BJ (cell line): ENCODE measurements at regions of chr7 and their contacts with region 1.

Region 1: GRCh38 chr7:136687693-136688322 is 180.6 kb upstream of the CHRM2 start:
- DNase-seq: no peak
- H3K4me3 ChIP-seq: no peak overlapping the region
- H3K27me3 ChIP-seq: no peaks in the 10 kb centered on the region
- CTCF ChIP-seq: peak; percentile 68

Region 2: GRCh38 chr7:136665878-136666509 is 21.8 kb before region 1 on chr7:
- CTCF ChIA-PET with region 1: no interaction called
- POLR2A ChIA-PET with region 1: no interaction called
- DNase-seq: no peak
- H3K4me3 ChIP-seq: no peak overlapping the region
- H3K27me3 ChIP-seq: no peaks in the 10 kb centered on the region
- CTCF ChIP-seq: no peak

Region 3: DNA sequence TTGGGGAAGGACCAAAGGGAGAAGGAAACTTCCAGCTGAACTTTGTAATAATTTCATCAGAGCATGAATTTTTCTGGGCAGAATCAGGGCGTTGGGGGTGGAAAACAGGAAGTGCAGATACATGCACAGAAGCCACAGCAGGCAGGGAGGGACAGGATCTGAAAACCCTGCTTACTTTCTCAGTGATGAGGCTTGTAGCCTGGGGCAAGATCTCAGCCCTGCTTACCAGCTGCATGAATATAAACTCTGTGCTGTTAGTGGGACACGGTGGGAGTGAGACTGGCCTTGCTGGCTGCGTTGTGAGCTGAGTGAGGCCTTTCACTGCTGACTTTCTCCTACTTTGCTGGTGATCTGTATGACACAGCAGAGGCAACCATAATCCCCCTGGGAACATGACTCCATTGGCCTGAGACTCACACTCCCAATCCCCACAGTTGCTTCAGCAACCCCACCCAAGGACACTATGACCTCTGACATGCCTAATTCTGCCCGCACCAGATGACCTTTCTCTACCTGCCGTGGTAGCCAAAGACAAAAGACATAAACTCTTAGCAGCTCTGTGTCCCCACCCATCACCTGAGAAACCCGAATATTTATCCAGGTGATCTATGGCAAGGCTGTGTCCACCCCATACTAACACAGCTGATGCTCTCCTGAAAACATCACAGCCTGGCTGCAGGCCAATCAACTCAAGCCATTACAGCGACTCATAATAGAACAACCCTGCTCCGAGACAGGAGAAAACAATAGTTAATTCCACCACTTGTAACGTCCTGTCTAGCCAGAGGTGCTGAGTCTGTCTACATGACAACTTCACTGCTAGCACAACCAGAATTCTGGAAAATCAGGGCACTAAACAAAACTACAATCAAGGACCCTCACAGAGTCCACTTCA is 10.1 kb before region 1 on chr7:
- CTCF ChIA-PET with region 1: interaction called, 21 read pairs
- POLR2A ChIA-PET with region 1: no interaction called
- DNase-seq: peak; percentile 33
- H3K4me3 ChIP-seq: no peak overlapping the region
- H3K27me3 ChIP-seq: no peaks in the 10 kb centered on the region
- CTCF ChIP-seq: no peak

Region 4: DNA sequence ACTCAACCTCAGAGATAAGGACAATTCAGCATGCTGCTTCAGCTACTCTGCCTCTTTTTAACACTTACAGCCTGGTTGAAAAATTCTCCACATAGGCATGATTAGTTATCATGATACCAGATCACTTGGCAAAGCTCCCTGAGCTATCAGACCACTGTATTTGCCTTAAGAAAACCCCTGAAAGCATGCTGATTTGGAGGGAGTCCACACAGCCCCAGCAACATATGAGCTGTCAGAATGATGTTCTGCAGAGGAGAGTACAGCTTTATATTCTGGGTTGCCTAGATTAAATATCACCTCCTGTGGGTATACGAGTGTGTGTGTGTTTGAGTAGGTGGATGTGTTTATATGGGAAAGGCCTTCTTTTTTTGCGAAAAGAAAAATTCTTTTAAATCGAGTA is 10.4 kb after region 1 on chr7:
- CTCF ChIA-PET with region 1: interaction called, 15 read pairs
- POLR2A ChIA-PET with region 1: no interaction called
- DNase-seq: no peak
- H3K4me3 ChIP-seq: no peak overlapping the region
- H3K27me3 ChIP-seq: no peaks in the 10 kb centered on the region; the same call in 1 of the 2 replicates
- CTCF ChIP-seq: no peak

Region 5: DNA sequence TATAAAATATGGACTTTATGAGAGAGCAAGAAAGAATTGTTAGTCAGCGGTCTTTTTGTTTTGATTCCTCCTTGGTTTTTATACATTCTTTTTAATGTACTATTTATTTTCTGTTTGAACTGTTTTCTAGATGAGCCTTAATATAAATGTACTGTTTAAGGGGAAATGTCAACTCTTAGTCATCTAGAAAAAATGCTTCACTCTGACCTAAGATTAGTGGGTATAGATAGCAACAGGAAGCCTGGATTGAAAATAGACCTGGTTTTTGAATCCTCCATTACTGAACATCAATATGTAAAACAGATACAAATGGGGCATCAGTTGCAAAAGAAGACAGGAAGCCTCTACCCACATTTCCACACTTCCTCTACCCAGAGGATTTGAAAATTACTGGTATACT is 268.4 kb after region 1 on chr7:
- CTCF ChIA-PET with region 1: no interaction called
- POLR2A ChIA-PET with region 1: no interaction called
- DNase-seq: peak; percentile 44
- H3K4me3 ChIP-seq: no peak overlapping the region
- H3K27me3 ChIP-seq: no peaks in the 10 kb centered on the region
- CTCF ChIP-seq: no peak